ENCODE measurements at regions of chr4 and their contacts with region 1.

Region 1: GRCh38 chr4:113141901-113142346 is 92.5 kb downstream of the ANK2 start:
- DNase-seq: peak; percentile 98
- ATAC-seq: peak; percentile 87
- H3K4me3 ChIP-seq: peak overlapping the region in 2 of 3 experiments; percentile 1 to 15; a peak in 1 of 6 replicates
- H3K27ac ChIP-seq: peak overlapping the region; percentile 49
- H3K4me1 ChIP-seq: peaks cover 52% of the 10 kb centered on the region
- H3K27me3 ChIP-seq: no peaks in the 10 kb centered on the region
- CTCF ChIP-seq: no peak
- EP300 ChIP-seq: peak; percentile 64 to 91; a peak in 3 of 4 replicates
- POLR2A ChIP-seq: peak in 1 of 2 experiments; percentile 59; a peak in 2 of 4 replicates
- RAD21 ChIP-seq: no peak

Region 2: GRCh38 chr4:112109186-112110058 is 1032.5 kb before region 1 on chr4:
- CTCF ChIA-PET with region 1: no interaction called
- POLR2A ChIA-PET with region 1: no interaction called
- in situ Hi-C with region 1: no loop called
- intact Hi-C with region 1: no loop called
- DNase-seq: peak; percentile 20
- ATAC-seq: no peak
- H3K4me3 ChIP-seq: no peak overlapping the region
- H3K27ac ChIP-seq: no peak overlapping the region
- H3K4me1 ChIP-seq: peaks cover 34% of the 10 kb centered on the region
- H3K27me3 ChIP-seq: peaks cover 0 to 4% of the 10 kb centered on the region in 2 experiments; a peak in 1 of 5 replicates
- CTCF ChIP-seq: no peak
- EP300 ChIP-seq: no peak
- POLR2A ChIP-seq: no peak
- RAD21 ChIP-seq: no peak

Region 3: GRCh38 chr4:113187358-113187757 is 45.4 kb after region 1 on chr4:
- CTCF ChIA-PET with region 1: no interaction called
- POLR2A ChIA-PET with region 1: no interaction called
- in situ Hi-C with region 1: no loop called
- intact Hi-C with region 1: loop called (anchors 5 kb)
- DNase-seq: no peak
- ATAC-seq: peak; percentile 37; the same call in 2 of the 3 replicates
- H3K4me3 ChIP-seq: no peak overlapping the region; a peak in 1 of 6 replicates
- H3K27ac ChIP-seq: peak overlapping the region; percentile 46
- H3K4me1 ChIP-seq: peaks cover 32% of the 10 kb centered on the region
- H3K27me3 ChIP-seq: no peaks in the 10 kb centered on the region
- CTCF ChIP-seq: no peak
- EP300 ChIP-seq: no peak
- POLR2A ChIP-seq: no peak
- RAD21 ChIP-seq: no peak

Region 4: DNA sequence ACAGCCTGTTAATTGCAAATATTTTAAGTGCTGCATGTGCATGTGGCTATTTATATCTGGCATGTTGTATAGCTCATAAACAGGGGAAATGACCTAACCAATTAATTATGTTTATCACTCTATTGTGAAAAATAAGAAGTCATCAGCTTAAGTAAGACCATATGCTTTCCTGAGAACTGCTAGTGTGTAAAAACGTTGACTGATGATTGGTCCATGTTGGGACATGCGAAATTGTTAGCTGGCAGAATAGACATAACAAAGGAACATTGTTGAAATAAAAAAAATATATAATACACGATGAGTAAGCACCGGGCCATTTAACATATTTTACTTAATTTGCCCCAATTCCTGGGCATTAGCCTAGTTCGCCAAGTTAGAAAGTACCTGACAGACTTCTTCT is 115.0 kb after region 1 on chr4:
- CTCF ChIA-PET with region 1: no interaction called
- POLR2A ChIA-PET with region 1: no interaction called
- in situ Hi-C with region 1: no loop called
- intact Hi-C with region 1: no loop called
- DNase-seq: no peak
- ATAC-seq: no peak
- H3K4me3 ChIP-seq: no peak overlapping the region
- H3K27ac ChIP-seq: no peak overlapping the region
- H3K4me1 ChIP-seq: no peaks in the 10 kb centered on the region
- H3K27me3 ChIP-seq: no peaks in the 10 kb centered on the region
- CTCF ChIP-seq: no peak
- EP300 ChIP-seq: no peak
- POLR2A ChIP-seq: no peak
- RAD21 ChIP-seq: no peak